HepG2 (cell line): ENCODE measurements at regions of chr6 and their contacts with region 1.

Region 1: DNA sequence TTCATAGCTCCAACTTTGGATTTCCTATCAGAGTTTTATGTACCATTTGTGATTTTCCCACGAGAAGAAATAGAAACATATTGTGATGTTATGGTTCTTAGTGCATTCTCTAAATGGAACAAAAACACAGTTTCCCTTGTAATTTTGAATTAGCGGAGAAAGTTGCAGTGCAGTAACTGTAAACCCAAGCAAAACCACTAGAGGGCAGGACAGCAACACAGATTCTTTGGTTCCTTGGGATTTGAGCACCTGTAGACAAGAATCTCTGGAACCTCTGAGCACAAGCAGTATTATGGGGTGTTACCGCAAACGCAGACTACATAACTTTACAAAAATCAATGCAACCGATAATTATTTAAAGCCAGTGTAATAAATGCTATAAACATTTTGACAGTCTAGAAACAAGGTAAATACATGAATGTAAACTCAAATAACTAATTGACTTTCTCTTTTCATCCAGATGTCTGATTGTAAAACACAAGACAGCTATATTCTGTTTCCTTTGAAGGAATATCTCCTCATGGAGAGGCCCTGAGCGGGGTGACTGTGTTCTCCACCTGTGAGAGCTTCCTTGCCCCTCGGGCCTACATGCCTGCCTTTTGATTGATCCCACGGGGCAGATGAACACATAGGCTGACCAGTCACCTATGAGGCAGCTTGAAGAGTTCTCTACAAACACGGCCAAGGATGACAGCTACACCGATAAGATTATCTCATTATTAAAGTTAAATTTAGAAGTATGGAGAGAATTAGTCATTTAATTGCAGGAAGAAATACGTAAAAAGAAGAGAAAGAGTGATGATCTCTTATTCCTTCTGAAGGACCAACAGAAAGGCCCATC is 67.5 kb upstream of the COL21A1 start:
- DNase-seq: peak; percentile 47
- ATAC-seq: peak; percentile 86
- H3K4me3 ChIP-seq: no peak overlapping the region
- H3K27ac ChIP-seq: no peak overlapping the region
- H3K4me1 ChIP-seq: no peaks in the 10 kb centered on the region
- H3K27me3 ChIP-seq: peaks cover 0 to 8% of the 10 kb centered on the region in 2 experiments; a peak in 1 of 5 replicates
- CTCF ChIP-seq: peak; percentile 80
- EP300 ChIP-seq: no peak
- POLR2A ChIP-seq: no peak
- RAD21 ChIP-seq: peak; percentile 64

Region 2: GRCh38 chr6:56595490-56596122 is 280.7 kb after region 1 on chr6:
- CTCF ChIA-PET with region 1: interaction called, 22 read pairs
- POLR2A ChIA-PET with region 1: no interaction called
- in situ Hi-C with region 1: no loop called
- intact Hi-C with region 1: loop called (anchors 1 kb)
- DNase-seq: peak; percentile 43
- ATAC-seq: peak; percentile 89
- H3K4me3 ChIP-seq: no peak overlapping the region
- H3K27ac ChIP-seq: no peak overlapping the region
- H3K4me1 ChIP-seq: no peaks in the 10 kb centered on the region
- H3K27me3 ChIP-seq: no peaks in the 10 kb centered on the region
- CTCF ChIP-seq: peak; percentile 74
- EP300 ChIP-seq: no peak
- POLR2A ChIP-seq: no peak
- RAD21 ChIP-seq: no peak

Region 3: DNA sequence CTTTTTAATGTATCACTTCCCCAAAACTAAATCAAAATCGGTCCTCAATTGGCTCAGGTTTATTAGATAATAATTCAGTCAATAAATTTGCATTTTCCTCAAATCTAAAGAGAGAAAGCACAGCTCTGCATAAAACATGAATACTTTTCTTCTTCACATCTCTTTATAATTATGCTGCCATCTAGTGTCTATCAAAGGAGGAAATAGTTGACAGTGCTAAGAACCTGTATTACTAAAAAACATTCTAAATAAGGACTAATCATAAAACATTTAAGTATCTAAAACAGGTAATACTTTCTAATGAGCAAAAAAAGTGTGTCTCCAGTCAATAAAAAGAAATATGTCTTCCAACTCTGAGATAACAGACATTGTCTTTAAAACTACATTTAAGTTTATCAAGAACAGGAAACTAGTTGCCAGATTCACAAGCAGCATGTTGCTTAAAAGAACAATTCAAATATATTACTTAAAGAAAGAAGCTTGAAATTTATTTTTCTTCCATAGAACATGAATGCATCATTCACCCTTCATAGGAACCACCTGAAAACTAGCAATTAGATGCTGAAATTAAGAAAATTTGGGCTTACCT is 384.3 kb after region 1 on chr6:
- CTCF ChIA-PET with region 1: no interaction called
- POLR2A ChIA-PET with region 1: no interaction called
- in situ Hi-C with region 1: no loop called
- intact Hi-C with region 1: loop called (anchors 10 kb)
- DNase-seq: peak; percentile 43
- ATAC-seq: peak; percentile 54; the same call in 2 of the 3 replicates
- H3K4me3 ChIP-seq: no peak overlapping the region
- H3K27ac ChIP-seq: no peak overlapping the region
- H3K4me1 ChIP-seq: no peaks in the 10 kb centered on the region
- H3K27me3 ChIP-seq: no peaks in the 10 kb centered on the region
- CTCF ChIP-seq: peak; percentile 68
- EP300 ChIP-seq: no peak
- POLR2A ChIP-seq: no peak
- RAD21 ChIP-seq: peak; percentile 40; the same call in 1 of the 2 replicates